Head of caudate nucleus (tissue), 42 donors: ENCODE measurements at regions of chr16 and their contacts with region 1.

Region 1: GRCh38 chr16:69424053-69424934 is at the start of gene CYB5B:
- DNase-seq: peak; percentile 86 to 98 (median 94)

Region 2: DNA sequence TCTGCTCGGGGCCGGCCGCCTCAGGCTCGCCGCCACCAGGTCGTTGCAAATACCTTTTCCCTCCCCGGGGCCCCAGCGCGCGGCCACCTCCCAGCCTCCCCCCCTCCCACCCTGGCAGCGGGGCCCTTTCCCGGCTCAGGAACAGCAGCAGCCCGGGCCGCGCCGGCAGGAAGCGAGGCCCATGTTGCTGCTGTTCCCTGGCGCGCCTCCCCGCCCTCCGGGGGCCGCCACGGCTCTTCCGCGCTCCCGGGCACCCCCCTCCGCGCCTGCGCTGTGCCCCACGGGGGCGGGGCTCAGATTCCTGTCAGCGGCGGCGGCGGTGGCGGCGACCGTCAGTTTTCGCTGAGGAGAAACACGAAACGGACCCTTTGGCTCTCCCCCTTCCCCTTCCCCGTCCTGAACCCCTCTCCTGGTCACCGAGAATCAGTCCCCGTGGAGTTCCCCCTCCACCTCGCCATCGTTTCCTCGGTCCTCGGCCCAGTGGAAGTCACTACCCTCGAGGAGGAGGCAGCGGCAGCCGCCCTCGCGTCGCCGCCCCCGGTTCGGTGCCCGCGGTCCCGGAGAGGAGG is 141.5 kb after region 1 on chr16 and contains the start of gene NFAT5:
- intact Hi-C with region 1: loop called (anchors 10 kb)
- DNase-seq: peak; percentile 69 to 97 (median 93)